ENCODE measurements at regions of chr14 and their contacts with region 1.

Region 1: DNA sequence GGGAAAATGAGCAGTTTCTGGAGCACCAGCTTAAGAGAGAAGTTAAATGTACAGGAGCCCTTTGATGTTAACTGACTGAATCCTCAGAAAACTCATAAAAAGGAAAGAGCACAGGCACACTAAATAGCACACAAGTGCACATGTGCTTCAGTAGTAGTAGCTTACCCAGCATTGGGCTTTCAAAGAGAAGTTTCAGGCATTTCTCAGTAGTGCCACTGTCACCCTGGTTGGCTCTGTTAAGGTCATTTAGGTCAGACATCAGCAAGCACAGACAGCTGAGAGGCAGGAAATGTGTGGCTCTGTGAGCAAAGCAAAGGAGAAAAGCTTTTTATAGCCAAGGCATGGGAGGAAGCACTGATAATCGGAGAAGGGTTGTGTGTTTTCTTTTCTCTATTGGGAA is 96.3 kb upstream of the HIF1A start:
- DNase-seq: peak; percentile 68
- ATAC-seq: peak; percentile 70
- H3K4me3 Mint-ChIP-seq: no peak overlapping the region
- H3K27ac Mint-ChIP-seq: peak overlapping the region; percentile 88
- H3K4me1 Mint-ChIP-seq: peaks cover 52% of the 10 kb centered on the region
- H3K27me3 Mint-ChIP-seq: no peaks in the 10 kb centered on the region
- CTCF ChIP-seq: no peak

Region 2: DNA sequence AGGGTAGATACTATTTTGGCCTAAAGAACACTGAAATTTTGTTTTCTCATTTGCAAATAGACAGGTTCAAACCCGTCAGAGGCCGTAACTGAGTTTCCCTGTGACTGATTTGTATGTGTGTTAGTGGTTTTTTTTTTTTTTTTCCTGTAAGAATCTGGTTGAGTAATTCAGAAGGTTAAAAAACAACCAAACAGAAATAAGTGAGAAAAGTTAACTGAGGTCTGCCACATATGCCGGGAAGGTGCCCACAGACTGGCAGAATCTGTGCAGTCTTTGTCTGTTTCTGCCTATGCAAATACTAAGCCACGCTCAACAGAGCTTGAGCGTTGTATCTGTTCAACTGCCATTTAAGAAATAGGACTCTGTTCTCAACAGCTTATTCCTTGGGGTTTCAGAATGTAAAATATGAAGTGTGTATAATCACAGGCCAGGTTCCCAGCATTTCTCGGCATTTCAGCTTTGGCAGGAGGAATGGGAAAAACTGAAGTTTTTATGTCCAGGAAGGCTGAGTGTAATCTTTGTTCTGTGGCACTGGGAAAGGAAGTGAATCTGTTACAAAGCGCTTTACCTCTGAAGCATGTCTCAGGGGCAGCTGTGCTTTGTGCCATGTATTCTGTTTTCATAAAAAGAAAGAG is 95.7 kb before region 1 on chr14:
- CTCF ChIA-PET with region 1: interaction called, 3 read pairs
- POLR2A ChIA-PET with region 1: no interaction called
- intact Hi-C with region 1: loop called (anchors 10 kb)
- DNase-seq: peak; percentile 89
- ATAC-seq: peak; percentile 75
- H3K4me3 Mint-ChIP-seq: peak overlapping the region; percentile 70
- H3K27ac Mint-ChIP-seq: peak overlapping the region; percentile 100
- H3K4me1 Mint-ChIP-seq: peaks cover 97% of the 10 kb centered on the region
- H3K27me3 Mint-ChIP-seq: no peaks in the 10 kb centered on the region
- CTCF ChIP-seq: no peak

Region 3: GRCh38 chr14:61517911-61518384 is 81.0 kb before region 1 on chr14:
- CTCF ChIA-PET with region 1: no interaction called
- POLR2A ChIA-PET with region 1: no interaction called
- intact Hi-C with region 1: no loop called
- DNase-seq: no peak
- ATAC-seq: no peak
- H3K4me3 Mint-ChIP-seq: no peak overlapping the region
- H3K27ac Mint-ChIP-seq: peak overlapping the region; percentile 71
- H3K4me1 Mint-ChIP-seq: peaks cover 89% of the 10 kb centered on the region
- H3K27me3 Mint-ChIP-seq: no peaks in the 10 kb centered on the region
- CTCF ChIP-seq: no peak

Region 4: GRCh38 chr14:61609191-61609843 is 10.3 kb after region 1 on chr14:
- CTCF ChIA-PET with region 1: interaction called, 22 read pairs
- POLR2A ChIA-PET with region 1: interaction called, 21 read pairs
- intact Hi-C with region 1: no loop called
- DNase-seq: no peak
- ATAC-seq: no peak
- H3K4me3 Mint-ChIP-seq: no peak overlapping the region
- H3K27ac Mint-ChIP-seq: no peak overlapping the region
- H3K4me1 Mint-ChIP-seq: peaks cover 7% of the 10 kb centered on the region
- H3K27me3 Mint-ChIP-seq: peaks cover 2% of the 10 kb centered on the region
- CTCF ChIP-seq: no peak

Region 5: GRCh38 chr14:61662437-61663311 is 63.7 kb after region 1 on chr14:
- CTCF ChIA-PET with region 1: no interaction called
- POLR2A ChIA-PET with region 1: interaction called, 7 read pairs
- intact Hi-C with region 1: loop called (anchors 2 kb)
- DNase-seq: peak; percentile 81
- ATAC-seq: peak; percentile 85
- H3K4me3 Mint-ChIP-seq: peak overlapping the region; percentile 51
- H3K27ac Mint-ChIP-seq: peak overlapping the region; percentile 97
- H3K4me1 Mint-ChIP-seq: peaks cover 61% of the 10 kb centered on the region
- H3K27me3 Mint-ChIP-seq: no peaks in the 10 kb centered on the region
- CTCF ChIP-seq: no peak

Measured in activated CD8-positive, alpha-beta T cell treated with anti-CD3 and anti-CD28 coated beads for 36 hours (primary cell).